MCF 10A (cell line): ENCODE measurements at regions of chr1 and their contacts with region 1.

Region 1: DNA sequence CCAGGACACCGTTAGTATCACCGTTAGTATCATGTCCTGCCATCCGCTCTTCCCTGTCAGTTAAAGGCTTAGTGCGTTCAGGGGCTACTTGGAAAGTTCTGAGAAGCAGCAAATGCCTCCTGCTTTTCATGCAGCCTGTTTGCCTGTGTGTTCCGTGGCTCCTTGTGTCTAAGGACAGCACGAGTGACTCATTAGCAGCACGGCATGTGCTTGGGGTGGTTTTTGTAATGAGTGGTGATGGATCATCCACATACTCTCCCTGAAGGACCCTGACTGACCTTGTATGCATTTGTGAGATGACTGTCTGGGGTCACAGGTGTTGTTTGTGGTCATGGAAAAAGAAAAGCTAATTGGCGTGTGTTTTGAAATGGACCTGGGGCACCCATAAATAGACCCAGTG is 221.9 kb downstream of the PBX1 start:
- DNase-seq: peak; percentile 66
- H3K4me3 Mint-ChIP-seq: no peak overlapping the region
- H3K27ac Mint-ChIP-seq: peak overlapping the region; percentile 2
- H3K4me1 Mint-ChIP-seq: peaks cover 34% of the 10 kb centered on the region
- H3K27me3 Mint-ChIP-seq: no peaks in the 10 kb centered on the region
- CTCF ChIP-seq: no peak

Region 2: DNA sequence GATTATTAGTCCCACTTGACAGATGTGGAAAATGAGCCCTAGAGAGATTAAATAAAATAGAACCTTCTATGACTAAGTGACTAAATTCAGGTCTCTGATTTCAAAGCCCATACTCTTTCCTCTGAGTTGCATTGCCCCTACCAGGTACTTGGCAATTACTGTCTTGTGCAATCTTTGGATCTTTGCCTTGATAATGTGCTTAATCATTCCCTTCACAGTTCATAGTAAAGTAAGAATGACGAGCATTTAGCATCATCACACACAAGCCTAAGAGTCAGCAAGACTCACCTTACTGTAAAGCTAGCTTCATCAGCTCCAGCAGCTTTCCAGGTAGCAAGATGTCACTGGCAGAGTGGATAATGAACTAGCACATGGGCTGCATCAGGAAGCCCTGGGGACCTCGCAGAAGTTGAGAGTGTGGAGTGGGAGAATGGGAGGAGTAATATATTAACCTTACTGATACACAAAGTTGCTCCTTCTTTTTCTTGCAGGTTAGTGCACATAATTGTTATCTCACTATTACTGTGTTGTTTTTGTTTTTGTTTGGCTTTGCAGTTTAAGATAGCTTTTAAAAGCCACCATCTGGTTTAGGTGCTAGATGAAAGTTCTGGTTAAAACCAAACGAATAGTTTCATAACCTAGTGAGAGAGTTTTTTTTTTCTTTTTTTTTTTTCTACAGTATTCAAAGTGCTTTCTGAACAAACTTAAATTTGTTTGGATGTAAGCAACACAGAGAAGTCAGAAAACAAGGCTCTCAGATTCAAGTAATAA is 150.1 kb before region 1 on chr1:
- CTCF ChIA-PET with region 1: interaction called, 15 read pairs
- POLR2A ChIA-PET with region 1: interaction called, 4 read pairs
- intact Hi-C with region 1: no loop called
- DNase-seq: peak; percentile 90
- H3K4me3 Mint-ChIP-seq: no peak overlapping the region
- H3K27ac Mint-ChIP-seq: no peak overlapping the region
- H3K4me1 Mint-ChIP-seq: peaks cover 13% of the 10 kb centered on the region
- H3K27me3 Mint-ChIP-seq: no peaks in the 10 kb centered on the region
- CTCF ChIP-seq: no peak

Region 3: DNA sequence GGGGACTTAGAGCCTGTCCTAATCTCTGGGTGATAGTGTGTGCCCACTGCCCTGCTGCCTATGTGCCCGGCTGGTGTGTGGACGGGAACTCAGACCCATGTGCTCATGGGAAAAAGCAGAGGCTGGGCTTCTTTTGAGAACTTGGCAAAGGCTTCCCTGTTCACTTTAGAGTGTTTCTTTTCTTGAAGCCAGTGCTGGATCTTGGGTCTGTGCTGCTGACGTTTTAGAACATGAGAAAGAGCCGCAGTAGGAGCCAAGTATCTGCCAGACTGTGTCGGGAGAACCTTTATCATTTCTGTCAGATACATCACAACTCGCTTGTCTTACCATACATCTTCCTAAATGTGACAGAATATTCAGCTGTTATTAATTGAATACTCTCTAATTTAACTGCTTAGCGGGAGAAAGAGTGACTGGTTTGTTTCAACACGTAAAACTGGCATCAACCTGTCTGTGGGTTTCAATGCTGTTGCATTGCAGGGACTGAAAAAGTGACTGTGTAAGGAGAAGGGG is 26.7 kb before region 1 on chr1:
- CTCF ChIA-PET with region 1: no interaction called
- POLR2A ChIA-PET with region 1: no interaction called
- intact Hi-C with region 1: no loop called
- DNase-seq: no peak
- H3K4me3 Mint-ChIP-seq: no peak overlapping the region
- H3K27ac Mint-ChIP-seq: no peak overlapping the region
- H3K4me1 Mint-ChIP-seq: peaks cover 8% of the 10 kb centered on the region
- H3K27me3 Mint-ChIP-seq: no peaks in the 10 kb centered on the region
- CTCF ChIP-seq: no peak

Region 4: DNA sequence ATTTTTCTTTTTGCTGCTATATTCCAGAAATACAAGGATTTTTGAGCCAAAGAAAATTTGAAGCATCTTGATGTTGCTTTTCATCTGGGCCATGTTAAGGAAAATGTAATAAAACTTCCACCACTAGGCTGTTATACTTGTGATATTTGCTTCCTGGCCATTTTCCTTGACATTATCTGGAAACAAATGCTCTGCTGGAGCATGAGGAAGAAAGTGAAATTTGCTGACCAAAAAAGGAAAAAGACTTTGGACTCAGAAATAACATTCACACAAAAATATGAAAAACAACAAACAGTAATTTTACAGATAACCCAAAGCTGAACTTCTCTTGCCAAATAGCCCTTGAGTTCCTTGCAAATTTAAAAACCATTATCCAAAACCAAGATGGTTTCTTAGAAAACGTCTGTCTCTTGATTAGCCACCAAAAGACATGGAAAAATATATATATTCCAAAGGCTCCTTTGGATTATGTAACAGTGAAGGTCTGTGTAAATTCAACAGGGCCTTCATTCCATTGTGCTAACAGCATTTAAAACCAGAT is 231.2 kb after region 1 on chr1:
- CTCF ChIA-PET with region 1: no interaction called
- POLR2A ChIA-PET with region 1: no interaction called
- intact Hi-C with region 1: no loop called
- DNase-seq: no peak
- H3K4me3 Mint-ChIP-seq: no peak overlapping the region
- H3K27ac Mint-ChIP-seq: no peak overlapping the region
- H3K4me1 Mint-ChIP-seq: no peaks in the 10 kb centered on the region
- H3K27me3 Mint-ChIP-seq: no peaks in the 10 kb centered on the region
- CTCF ChIP-seq: no peak